ENCODE measurements at regions of chr12 and their contacts with region 1.

Region 1: GRCh38 chr12:53327435-53328042 is 6.1 kb upstream of the AAAS start:
- DNase-seq: peak; percentile 18
- H3K4me3 Mint-ChIP-seq: no peak overlapping the region
- H3K27ac Mint-ChIP-seq: no peak overlapping the region
- H3K4me1 Mint-ChIP-seq: no peaks in the 10 kb centered on the region
- H3K27me3 Mint-ChIP-seq: peaks cover 45% of the 10 kb centered on the region
- CTCF ChIP-seq: peak; percentile 26

Region 2: DNA sequence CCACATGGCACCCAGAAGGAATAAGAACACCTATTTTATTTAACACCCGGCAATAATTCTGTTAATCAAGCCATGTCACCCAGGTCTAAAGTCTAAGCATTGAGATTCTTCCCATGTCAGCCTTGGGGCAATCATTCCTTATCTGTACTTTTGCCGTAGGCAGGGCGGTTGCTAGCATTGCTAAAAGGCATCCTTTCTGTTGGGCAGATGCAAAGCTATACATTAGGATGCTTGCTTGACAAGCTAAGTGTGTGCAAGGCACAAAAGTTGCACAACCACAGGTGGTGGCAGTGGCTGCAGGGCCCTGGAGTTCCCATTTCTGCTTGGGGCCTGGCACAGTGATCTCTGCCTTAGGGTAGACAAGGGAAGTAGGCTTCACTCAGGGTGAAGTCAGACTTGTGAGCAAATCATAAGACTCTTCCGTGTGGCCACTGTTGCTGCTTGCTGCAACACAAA is 1923.8 kb before region 1 on chr12:
- CTCF ChIA-PET with region 1: no interaction called
- intact Hi-C with region 1: no loop called
- DNase-seq: no peak
- H3K4me3 Mint-ChIP-seq: no peak overlapping the region
- H3K27ac Mint-ChIP-seq: no peak overlapping the region
- H3K4me1 Mint-ChIP-seq: peaks cover 11% of the 10 kb centered on the region
- H3K27me3 Mint-ChIP-seq: no peaks in the 10 kb centered on the region
- CTCF ChIP-seq: no peak

Region 3: GRCh38 chr12:52774629-52775250 is 552.8 kb before region 1 on chr12:
- CTCF ChIA-PET with region 1: no interaction called
- intact Hi-C with region 1: no loop called
- DNase-seq: no peak
- H3K4me3 Mint-ChIP-seq: no peak overlapping the region
- H3K27ac Mint-ChIP-seq: no peak overlapping the region
- H3K4me1 Mint-ChIP-seq: no peaks in the 10 kb centered on the region
- H3K27me3 Mint-ChIP-seq: peaks cover 85% of the 10 kb centered on the region
- CTCF ChIP-seq: no peak

Region 4: GRCh38 chr12:53251477-53252348 is 75.8 kb before region 1 on chr12:
- CTCF ChIA-PET with region 1: no interaction called
- intact Hi-C with region 1: no loop called
- DNase-seq: peak; percentile 67
- H3K4me3 Mint-ChIP-seq: peak overlapping the region; percentile 85
- H3K27ac Mint-ChIP-seq: peak overlapping the region; percentile 85
- H3K4me1 Mint-ChIP-seq: peaks cover 27% of the 10 kb centered on the region
- H3K27me3 Mint-ChIP-seq: no peaks in the 10 kb centered on the region
- CTCF ChIP-seq: peak; percentile 39

Region 5: GRCh38 chr12:53344824-53345485 is 17.4 kb after region 1 on chr12:
- CTCF ChIA-PET with region 1: interaction called, 11 read pairs
- intact Hi-C with region 1: no loop called
- DNase-seq: peak; percentile 69
- H3K4me3 Mint-ChIP-seq: peak overlapping the region; percentile 85
- H3K27ac Mint-ChIP-seq: peak overlapping the region; percentile 40
- H3K4me1 Mint-ChIP-seq: no peaks in the 10 kb centered on the region
- H3K27me3 Mint-ChIP-seq: peaks cover 58% of the 10 kb centered on the region
- CTCF ChIP-seq: peak; percentile 43

Region 6: GRCh38 chr12:53413485-53414204 is 86.1 kb after region 1 on chr12:
- CTCF ChIA-PET with region 1: no interaction called
- intact Hi-C with region 1: no loop called
- DNase-seq: no peak
- H3K4me3 Mint-ChIP-seq: no peak overlapping the region
- H3K27ac Mint-ChIP-seq: no peak overlapping the region
- H3K4me1 Mint-ChIP-seq: peaks cover 18% of the 10 kb centered on the region
- H3K27me3 Mint-ChIP-seq: no peaks in the 10 kb centered on the region
- CTCF ChIP-seq: no peak